CD4-positive, alpha-beta memory T cell (primary cell): ENCODE measurements at regions of chr6 and their contacts with region 1.

Region 1: DNA sequence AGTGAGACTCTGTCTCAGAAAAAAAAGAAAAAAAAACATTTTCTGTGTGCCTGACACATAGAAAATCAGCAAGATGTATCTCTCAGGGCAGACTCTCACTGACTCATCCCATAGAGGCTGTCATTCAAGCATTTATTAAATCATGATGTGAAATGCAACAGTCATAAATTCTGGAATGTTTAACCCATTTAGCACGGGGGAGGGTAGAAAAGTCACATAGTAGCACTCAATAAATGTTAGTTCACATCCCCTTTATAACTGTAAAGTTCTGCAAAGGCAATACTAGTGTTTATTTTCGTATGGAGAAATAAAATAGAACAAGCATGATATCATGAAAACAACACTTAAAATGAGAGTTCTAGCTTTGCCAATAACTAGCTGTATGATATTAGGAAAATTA is 15.5 kb upstream of the CARMIL1 start:
- DNase-seq: no peak
- H3K4me3 ChIP-seq: no peak overlapping the region
- H3K4me3 Mint-ChIP-seq: no peak overlapping the region
- H3K27ac ChIP-seq: no peak overlapping the region
- H3K27ac Mint-ChIP-seq: no peak overlapping the region
- H3K4me1 ChIP-seq: no peaks in the 10 kb centered on the region
- H3K4me1 Mint-ChIP-seq: peaks cover 2 to 4% (median 3%) of the 10 kb centered on the region in 4 donors
- H3K27me3 ChIP-seq: no peaks in the 10 kb centered on the region
- H3K27me3 Mint-ChIP-seq: peaks cover 2 to 9% of the 10 kb centered on the region in 2 donors

Region 2: GRCh38 chr6:25085756-25086155 is 177.9 kb before region 1 on chr6:
- CTCF ChIA-PET with region 1: no interaction called
- POLR2A ChIA-PET with region 1: no interaction called
- intact Hi-C with region 1: no loop called
- DNase-seq: peak in 4 of 5 donors; percentile 14 to 37 (median 22)
- H3K4me3 ChIP-seq: peak overlapping the region in 1 of 2 donors; percentile 12
- H3K4me3 Mint-ChIP-seq: peak overlapping the region in 7 of 8 donors; percentile 44 to 74 (median 70)
- H3K27ac ChIP-seq: no peak overlapping the region
- H3K27ac Mint-ChIP-seq: peak overlapping the region in 5 of 7 donors; percentile 6 to 65 (median 23)
- H3K4me1 ChIP-seq: peaks cover 32% of the 10 kb centered on the region
- H3K4me1 Mint-ChIP-seq: peaks cover 10 to 26% (median 21%) of the 10 kb centered on the region in 4 donors
- H3K27me3 ChIP-seq: no peaks in the 10 kb centered on the region
- H3K27me3 Mint-ChIP-seq: no peaks in the 10 kb centered on the region

Region 3: GRCh38 chr6:25250878-25251277 is 12.8 kb before region 1 on chr6:
- CTCF ChIA-PET with region 1: interaction called, 10 read pairs
- POLR2A ChIA-PET with region 1: no interaction called
- intact Hi-C with region 1: no loop called
- DNase-seq: no peak
- H3K4me3 ChIP-seq: no peak overlapping the region
- H3K4me3 Mint-ChIP-seq: no peak overlapping the region
- H3K27ac ChIP-seq: no peak overlapping the region
- H3K27ac Mint-ChIP-seq: no peak overlapping the region
- H3K4me1 ChIP-seq: no peaks in the 10 kb centered on the region
- H3K4me1 Mint-ChIP-seq: no peaks in the 10 kb centered on the region
- H3K27me3 ChIP-seq: no peaks in the 10 kb centered on the region
- H3K27me3 Mint-ChIP-seq: peaks cover 14% of the 10 kb centered on the region in 2 donors

Region 4: DNA sequence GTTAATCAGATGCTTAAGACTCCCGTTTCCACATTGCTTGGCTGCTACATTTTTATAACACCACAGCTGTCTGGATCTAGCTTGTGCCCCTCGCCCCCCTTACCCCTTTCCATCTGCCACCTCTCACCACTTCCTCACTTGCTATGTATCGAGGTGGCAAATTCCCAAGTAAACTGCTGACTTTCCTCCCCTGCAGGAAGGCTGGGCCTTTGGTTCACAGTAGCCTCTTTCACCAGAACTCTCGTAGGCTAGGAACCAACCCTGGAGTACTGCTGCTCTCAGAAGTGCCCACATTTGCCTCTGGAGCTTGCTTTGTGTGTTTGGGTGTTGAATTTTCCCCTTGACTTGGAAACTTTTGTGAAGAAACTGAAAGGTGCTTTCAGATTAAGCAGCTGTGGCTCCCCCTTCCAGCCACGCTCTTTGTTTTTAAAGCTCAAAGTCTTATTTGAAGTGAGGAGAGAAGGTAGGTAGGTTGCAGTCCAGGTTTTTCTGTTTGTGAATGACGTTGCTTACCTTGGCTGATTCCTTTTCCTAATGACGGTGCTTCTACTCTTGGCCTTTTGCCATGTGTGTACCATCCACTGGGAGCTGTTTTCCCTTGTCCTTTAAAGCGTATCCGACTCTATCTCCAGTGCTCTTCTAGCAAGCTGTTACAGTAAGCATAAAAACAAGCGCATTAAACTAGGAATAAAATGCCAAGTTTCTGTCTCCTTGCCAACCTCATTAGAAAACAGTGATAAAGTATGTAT is 106.0 kb after region 1 on chr6:
- CTCF ChIA-PET with region 1: interaction called, 15 read pairs
- POLR2A ChIA-PET with region 1: no interaction called
- intact Hi-C with region 1: no loop called
- DNase-seq: peak in 1 of 5 donors; percentile 34
- H3K4me3 ChIP-seq: peak overlapping the region; percentile 5 to 32
- H3K4me3 Mint-ChIP-seq: peak overlapping the region; percentile 57 to 88 (median 74)
- H3K27ac ChIP-seq: peak overlapping the region; percentile 28
- H3K27ac Mint-ChIP-seq: peak overlapping the region; percentile 56 to 97 (median 81)
- H3K4me1 ChIP-seq: peaks cover 49% of the 10 kb centered on the region
- H3K4me1 Mint-ChIP-seq: peaks cover 44 to 91% (median 66%) of the 10 kb centered on the region in 4 donors
- H3K27me3 ChIP-seq: no peaks in the 10 kb centered on the region
- H3K27me3 Mint-ChIP-seq: no peaks in the 10 kb centered on the region

Region 5: DNA sequence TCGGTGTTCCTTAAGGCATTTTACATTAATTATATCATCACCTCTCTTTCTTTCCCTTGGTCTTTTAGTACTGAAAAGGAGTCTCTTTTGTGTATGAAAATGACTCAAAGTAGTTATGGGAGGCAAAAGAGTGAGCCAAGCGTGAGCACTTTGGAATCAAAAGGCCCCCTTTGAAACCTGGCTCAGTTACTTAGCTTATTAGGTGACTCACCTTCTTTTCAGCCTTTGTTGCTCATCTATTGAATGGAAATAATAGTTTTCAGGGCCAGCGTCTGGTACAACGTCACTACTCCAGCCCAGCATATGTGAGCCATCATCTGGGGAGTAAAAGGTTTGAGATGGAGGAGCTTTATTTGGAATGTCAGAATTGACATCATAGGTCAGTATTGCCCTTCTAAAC is 241.0 kb after region 1 on chr6:
- CTCF ChIA-PET with region 1: interaction called, 11 read pairs
- POLR2A ChIA-PET with region 1: no interaction called
- intact Hi-C with region 1: no loop called
- DNase-seq: no peak
- H3K4me3 ChIP-seq: no peak overlapping the region
- H3K4me3 Mint-ChIP-seq: no peak overlapping the region
- H3K27ac ChIP-seq: no peak overlapping the region
- H3K27ac Mint-ChIP-seq: no peak overlapping the region
- H3K4me1 ChIP-seq: no peaks in the 10 kb centered on the region
- H3K4me1 Mint-ChIP-seq: no peaks in the 10 kb centered on the region
- H3K27me3 ChIP-seq: no peaks in the 10 kb centered on the region
- H3K27me3 Mint-ChIP-seq: no peaks in the 10 kb centered on the region

Region 6: DNA sequence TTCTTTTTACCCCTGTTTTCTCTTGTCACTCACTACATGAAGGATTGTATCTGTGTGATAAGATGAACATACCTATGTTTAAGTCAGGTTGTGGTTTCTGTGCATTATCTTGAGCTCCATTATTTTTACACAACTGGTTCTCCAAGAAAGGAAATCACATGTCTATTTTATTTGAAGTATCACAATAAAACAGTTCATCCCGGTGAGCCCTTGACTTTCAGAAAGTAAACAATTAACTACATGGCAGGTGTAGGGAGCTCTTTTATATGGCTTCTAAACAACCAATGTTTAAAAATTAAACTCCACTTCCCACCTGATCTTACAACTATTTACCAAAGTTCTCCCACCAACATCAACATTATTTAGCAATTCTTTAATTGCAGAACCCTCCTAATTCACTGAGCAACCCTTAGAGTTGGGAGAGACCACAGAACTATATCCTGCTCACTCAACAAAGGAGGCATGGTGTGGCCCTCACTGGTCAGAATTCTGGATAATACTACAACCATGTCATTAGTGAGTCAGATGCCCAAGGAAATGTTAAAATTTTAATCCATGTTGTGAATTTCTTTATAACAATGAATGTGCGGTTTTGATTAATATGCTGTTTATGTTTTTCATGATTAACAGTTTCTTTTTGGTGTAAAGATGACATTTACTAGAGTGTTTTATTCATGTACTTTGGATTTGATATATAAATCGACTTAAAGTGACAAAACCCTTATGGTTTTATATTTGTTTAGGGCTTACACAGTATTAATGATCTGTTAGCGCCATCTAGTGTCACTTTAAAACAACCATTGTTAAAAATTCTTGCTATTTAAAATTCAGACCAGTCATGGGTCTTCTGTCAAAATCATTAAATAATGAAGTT is 338.4 kb after region 1 on chr6:
- CTCF ChIA-PET with region 1: interaction called, 17 read pairs
- POLR2A ChIA-PET with region 1: no interaction called
- intact Hi-C with region 1: loop called (anchors 1 kb)
- DNase-seq: peak in 4 of 5 donors; percentile 35 to 46 (median 40)
- H3K4me3 ChIP-seq: no peak overlapping the region
- H3K4me3 Mint-ChIP-seq: no peak overlapping the region
- H3K27ac ChIP-seq: no peak overlapping the region
- H3K27ac Mint-ChIP-seq: no peak overlapping the region
- H3K4me1 ChIP-seq: no peaks in the 10 kb centered on the region
- H3K4me1 Mint-ChIP-seq: peaks cover 0 to 1% (median 0%) of the 10 kb centered on the region in 4 donors
- H3K27me3 ChIP-seq: no peaks in the 10 kb centered on the region
- H3K27me3 Mint-ChIP-seq: no peaks in the 10 kb centered on the region

Region 7: DNA sequence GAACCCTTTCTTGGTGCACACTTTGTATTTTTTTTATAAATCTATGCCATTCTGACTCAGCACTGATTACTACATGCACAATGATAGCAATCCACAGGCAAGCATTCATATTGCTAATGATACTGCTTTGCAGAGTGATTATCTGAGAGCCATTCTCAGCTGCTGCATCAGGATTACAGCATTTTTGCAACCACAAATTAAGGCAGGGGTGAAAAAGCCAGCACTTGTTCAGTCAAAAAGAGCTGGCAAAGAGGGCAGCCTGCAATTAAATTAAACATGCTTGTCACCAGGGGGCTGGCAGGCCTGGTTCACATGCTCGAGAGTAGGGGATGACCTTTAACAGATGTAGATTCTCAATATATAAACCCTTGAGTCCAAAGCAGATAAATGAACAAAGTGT is 450.2 kb after region 1 on chr6:
- CTCF ChIA-PET with region 1: no interaction called
- POLR2A ChIA-PET with region 1: no interaction called
- intact Hi-C with region 1: no loop called
- DNase-seq: no peak
- H3K4me3 ChIP-seq: no peak overlapping the region
- H3K4me3 Mint-ChIP-seq: no peak overlapping the region
- H3K27ac ChIP-seq: no peak overlapping the region
- H3K27ac Mint-ChIP-seq: no peak overlapping the region
- H3K4me1 ChIP-seq: no peaks in the 10 kb centered on the region
- H3K4me1 Mint-ChIP-seq: no peaks in the 10 kb centered on the region
- H3K27me3 ChIP-seq: no peaks in the 10 kb centered on the region
- H3K27me3 Mint-ChIP-seq: peaks cover 3 to 4% of the 10 kb centered on the region in 2 donors

Region 8: DNA sequence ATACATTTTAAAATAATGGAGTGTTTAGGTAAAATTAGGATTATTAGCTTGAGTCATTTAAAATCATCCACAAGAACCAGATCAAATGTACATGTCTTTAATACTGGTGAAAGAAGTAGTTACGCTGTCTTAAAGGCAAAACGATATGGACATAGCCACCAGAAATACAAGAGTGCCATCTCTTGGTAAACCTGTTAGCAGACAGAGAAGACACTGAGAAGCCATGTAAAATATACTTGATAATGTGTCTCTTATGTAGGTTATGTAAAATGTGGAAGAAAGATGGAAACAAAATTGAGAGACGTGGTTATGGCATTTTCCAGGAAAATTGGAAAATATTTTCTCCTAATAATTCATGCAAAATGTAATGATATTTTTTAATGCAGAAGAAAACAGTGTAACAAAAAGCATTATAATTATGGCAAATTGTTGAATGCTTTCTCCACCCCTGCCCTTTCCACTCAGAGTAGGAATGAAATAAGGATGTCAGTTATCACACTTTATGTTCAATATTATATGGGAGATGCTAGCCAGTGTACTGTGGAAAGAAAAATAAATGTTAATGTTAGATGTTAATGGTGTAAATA is 679.0 kb after region 1 on chr6:
- CTCF ChIA-PET with region 1: interaction called, 3 read pairs
- POLR2A ChIA-PET with region 1: no interaction called
- intact Hi-C with region 1: loop called (anchors 1 kb)
- DNase-seq: peak in 4 of 5 donors; percentile 27 to 40 (median 32)
- H3K4me3 ChIP-seq: no peak overlapping the region
- H3K4me3 Mint-ChIP-seq: no peak overlapping the region
- H3K27ac ChIP-seq: no peak overlapping the region
- H3K27ac Mint-ChIP-seq: no peak overlapping the region
- H3K4me1 ChIP-seq: peaks cover 9% of the 10 kb centered on the region
- H3K4me1 Mint-ChIP-seq: peaks cover 8 to 21% (median 15%) of the 10 kb centered on the region in 4 donors
- H3K27me3 ChIP-seq: no peaks in the 10 kb centered on the region
- H3K27me3 Mint-ChIP-seq: peaks cover 0 to 2% of the 10 kb centered on the region in 2 donors